ENCODE measurements at regions of chr16 and their contacts with region 1.

Region 1: GRCh38 chr16:25051406-25052150 is 36.4 kb upstream of the ARHGAP17 start:
- DNase-seq: no peak

Region 2: GRCh38 chr16:24930437-24930836 is 121.1 kb before region 1 on chr16:
- in situ Hi-C with region 1: no loop called
- DNase-seq: no peak

Region 3: GRCh38 chr16:25126820-25127232 is 75.2 kb after region 1 on chr16:
- in situ Hi-C with region 1: loop called (anchors 5 kb)
- DNase-seq: peak; percentile 78

Measured in KBM-7 (cell line).